Head of caudate nucleus (tissue), 42 donors: ENCODE measurements at regions of chr1 and their contacts with region 1.

Region 1: GRCh38 chr1:155091071-155091709 is 12.6 kb downstream of the EFNA3 start:
- DNase-seq: peak; percentile 63 to 94 (median 86)

Region 2: GRCh38 chr1:154765970-154766369 is 325.2 kb before region 1 on chr1:
- intact Hi-C with region 1: no loop called
- DNase-seq: peak in 6 of 42 donors; percentile 21 to 61 (median 50)

Region 3: DNA sequence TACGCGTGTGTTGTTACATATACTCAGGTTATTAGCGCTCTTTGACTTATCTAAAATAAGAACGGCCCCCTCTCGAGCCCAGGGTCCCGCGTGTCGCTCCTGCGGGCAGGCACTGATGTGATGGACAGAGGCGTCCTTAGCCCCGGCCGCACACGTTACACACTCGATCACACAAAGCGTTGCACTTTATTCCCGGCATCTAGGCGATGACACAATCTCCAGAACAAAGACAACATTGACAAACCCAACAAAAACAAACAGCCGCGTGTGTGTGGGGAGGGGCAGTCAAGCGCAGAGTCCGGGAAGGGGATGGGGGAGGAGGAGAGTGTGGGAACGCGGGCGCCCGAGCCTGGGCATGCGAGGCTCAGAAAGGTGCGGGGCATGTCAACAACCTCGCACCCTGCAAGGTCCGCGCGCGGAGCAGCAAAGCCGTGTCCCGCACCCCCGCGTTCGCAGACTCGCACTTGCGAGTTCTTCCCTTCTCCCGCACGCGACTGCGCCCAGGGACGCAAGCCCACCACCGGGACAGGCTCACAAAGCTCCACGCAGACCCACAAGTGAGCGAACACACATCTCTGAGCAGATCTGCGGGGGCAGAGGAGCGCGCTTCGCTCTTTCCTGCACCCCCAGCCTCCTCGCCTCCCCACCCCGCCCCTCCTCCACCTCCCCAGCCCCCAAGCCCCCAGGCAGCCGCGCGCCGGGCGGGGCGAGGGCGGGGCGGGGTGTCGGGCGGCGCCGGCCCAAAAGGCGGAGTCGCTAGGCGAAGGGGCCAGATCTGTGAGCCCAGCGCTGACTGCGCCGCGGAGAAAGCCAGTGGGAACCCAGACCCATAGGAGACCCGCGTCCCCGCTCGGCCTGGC is 36.1 kb after region 1 on chr1 and contains the start of gene EFNA1:
- intact Hi-C with region 1: loop called (anchors 5 kb)
- DNase-seq: peak; percentile 79 to 96 (median 90)

Region 4: GRCh38 chr1:155167166-155168104 is 76.2 kb after region 1 on chr1:
- intact Hi-C with region 1: loop called (anchors 1 kb)
- DNase-seq: peak; percentile 90 to 98 (median 95)

Region 5: GRCh38 chr1:155178441-155179111 is 87.4 kb after region 1 on chr1:
- intact Hi-C with region 1: no loop called
- DNase-seq: peak in 12 of 42 donors; percentile 2 to 32 (median 11)